Esophagus squamous epithelium (tissue), 5 donors: ENCODE measurements at regions of chr3 and their contacts with region 1.

Region 1: DNA sequence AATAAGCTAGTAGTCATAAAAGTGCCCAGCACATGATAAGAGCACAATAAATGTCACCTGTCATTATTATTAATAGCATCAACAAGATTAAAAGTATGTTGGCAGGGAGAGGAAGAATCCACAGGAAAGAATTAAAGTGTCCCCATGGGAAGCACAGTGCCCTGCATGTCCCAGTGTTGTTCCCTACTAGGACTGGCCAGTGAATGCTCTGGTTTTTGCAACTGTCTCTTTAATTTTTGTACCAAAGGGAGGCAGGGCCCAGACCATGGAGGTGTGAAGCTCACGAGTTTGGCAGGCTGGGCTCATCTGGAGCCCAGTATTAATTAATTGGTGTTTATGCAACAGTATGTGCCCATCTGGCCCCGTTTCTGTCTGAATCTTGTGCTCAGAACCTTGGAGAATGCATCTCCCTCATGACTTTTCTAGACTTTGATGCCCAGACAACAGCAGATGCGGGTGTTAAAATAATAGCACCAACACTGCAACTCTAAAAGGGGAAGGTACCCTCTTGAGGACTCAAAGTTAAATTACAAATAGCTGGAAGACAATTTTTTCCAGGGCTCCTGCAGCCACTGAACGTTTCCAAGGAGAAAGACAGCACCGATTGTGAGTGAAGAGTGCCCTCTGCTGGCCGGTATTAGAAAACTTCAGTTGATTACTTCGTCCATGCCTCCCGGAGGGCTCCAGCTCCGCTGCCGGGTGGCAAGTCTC is 71.9 kb upstream of the SPATA12 start:
- DNase-seq: no peak
- H3K4me3 ChIP-seq: peak overlapping the region in 1 of 4 donors; percentile 13
- H3K27ac ChIP-seq: peak overlapping the region in 3 of 4 donors; percentile 31 to 63 (median 40)
- H3K4me1 ChIP-seq: peaks cover 0 to 60% (median 19%) of the 10 kb centered on the region in 3 donors
- H3K27me3 ChIP-seq: no peaks in the 10 kb centered on the region
- CTCF ChIP-seq: peak; percentile 67 to 86 (median 80)
- POLR2A ChIP-seq: no peak

Region 2: GRCh38 chr3:56702490-56703315 is 285.9 kb before region 1 on chr3:
- intact Hi-C with region 1: loop called (anchors 5 kb)
- DNase-seq: no peak
- H3K4me3 ChIP-seq: no peak overlapping the region
- H3K27ac ChIP-seq: no peak overlapping the region
- H3K4me1 ChIP-seq: peaks cover 0 to 9% (median 0%) of the 10 kb centered on the region in 3 donors
- H3K27me3 ChIP-seq: no peaks in the 10 kb centered on the region
- CTCF ChIP-seq: peak; percentile 77 to 93 (median 88)
- POLR2A ChIP-seq: no peak

Region 3: GRCh38 chr3:56801662-56802377 is 186.8 kb before region 1 on chr3 and contains the start of gene ARHGEF3:
- intact Hi-C with region 1: loop called (anchors 5 kb)
- DNase-seq: no peak
- H3K4me3 ChIP-seq: peak within 1 kb of the TSS; percentile 49 to 94 (median 80)
- H3K27ac ChIP-seq: peak within 1 kb of the TSS; percentile 73 to 90 (median 82)
- H3K4me1 ChIP-seq: peaks cover 24 to 82% (median 29%) of the 10 kb centered on the region in 3 donors
- H3K27me3 ChIP-seq: no peaks in the 10 kb centered on the region
- CTCF ChIP-seq: peak; percentile 18 to 63 (median 45)
- POLR2A ChIP-seq: peak in 3 of 4 donors; percentile 5 to 95 (median 71)
- total RNA-seq, gene ARHGEF3: 20.6 to 26.3 (median 24.7) TPM

Region 4: GRCh38 chr3:57047974-57048671 is 59.5 kb after region 1 on chr3:
- intact Hi-C with region 1: no loop called
- DNase-seq: no peak
- H3K4me3 ChIP-seq: no peak overlapping the region
- H3K27ac ChIP-seq: peak overlapping the region; percentile 83 to 91 (median 84)
- H3K4me1 ChIP-seq: peaks cover 23 to 68% (median 48%) of the 10 kb centered on the region in 3 donors
- H3K27me3 ChIP-seq: no peaks in the 10 kb centered on the region
- CTCF ChIP-seq: no peak
- POLR2A ChIP-seq: no peak